GM10248 (cell line): ENCODE measurements at regions of chr3 and their contacts with region 1.

Region 1: DNA sequence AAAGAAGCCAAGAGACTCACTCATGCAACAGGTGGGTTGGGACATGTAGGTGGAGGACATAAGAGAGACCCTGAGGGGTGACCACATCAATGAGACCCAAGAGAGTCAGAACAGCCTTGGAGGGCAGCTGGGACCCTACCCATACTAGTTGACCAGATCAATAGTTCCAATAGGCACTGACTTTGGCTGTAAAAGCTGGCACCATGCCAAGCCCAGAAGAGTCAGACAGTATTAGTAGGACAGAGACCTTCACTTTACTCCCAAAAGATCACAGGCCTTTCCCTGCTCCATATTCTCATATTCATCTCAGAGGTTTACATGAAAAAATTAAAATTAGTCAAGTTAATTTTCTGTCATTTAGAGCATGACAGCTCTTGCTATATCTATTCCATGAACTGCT is 20.9 kb upstream of the GABRR3 start:
- DNase-seq: no peak
- CTCF ChIP-seq: no peak

Region 2: DNA sequence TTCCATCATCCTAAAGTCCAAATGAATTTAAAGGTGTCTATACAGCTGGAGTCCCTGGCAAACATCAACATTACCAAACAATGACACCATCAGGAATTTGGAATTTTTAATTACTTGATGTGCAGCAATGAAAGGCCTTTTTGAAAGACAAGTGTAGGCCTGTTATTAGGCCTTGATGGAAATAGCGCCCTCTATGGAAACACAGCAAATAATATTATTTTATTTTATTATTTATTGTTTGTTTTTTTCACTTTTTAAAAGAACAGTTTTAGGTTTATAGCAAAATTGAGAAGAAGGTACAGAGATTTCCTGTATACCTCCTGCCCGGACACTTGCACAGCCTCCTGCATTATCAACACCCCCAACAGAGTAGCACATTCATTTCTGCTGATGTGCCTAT is 12.8 kb after region 1 on chr3:
- CTCF ChIA-PET with region 1: interaction called, 13 read pairs
- POLR2A ChIA-PET with region 1: no interaction called
- DNase-seq: no peak
- CTCF ChIP-seq: no peak

Region 3: GRCh38 chr3:98095870-98096269 is 39.8 kb after region 1 on chr3:
- CTCF ChIA-PET with region 1: no interaction called
- POLR2A ChIA-PET with region 1: no interaction called
- DNase-seq: no peak
- CTCF ChIP-seq: no peak